Activated T-helper 1 cell treated with anti-CD3 and anti-CD28 coated beads, Interleukin-12 subunit alpha, Interleukin-12 subunit beta, Interleukin-2, Interleukin-4 antibody, amounts not matched to agents 30 ng/mL and 10 ng/mL and 1 ng/mL, durations not matched to agents 14 hours and 24 hours and 36 hours (primary cell): ENCODE measurements at regions of chr17 and their contacts with region 1.

Region 1: GRCh38 chr17:66397486-66397885 is 95.1 kb downstream of the PRKCA start:
- DNase-seq: no peak
- H3K4me3 Mint-ChIP-seq: no peak overlapping the region
- H3K27ac Mint-ChIP-seq: peak overlapping the region; percentile 69
- H3K4me1 Mint-ChIP-seq: peaks cover 80% of the 10 kb centered on the region
- H3K27me3 Mint-ChIP-seq: no peaks in the 10 kb centered on the region

Region 2: GRCh38 chr17:66364990-66365490 is 32.4 kb before region 1 on chr17:
- intact Hi-C with region 1: loop called (anchors 1 kb)
- DNase-seq: no peak
- H3K4me3 Mint-ChIP-seq: peak overlapping the region; percentile 53
- H3K27ac Mint-ChIP-seq: peak overlapping the region; percentile 91
- H3K4me1 Mint-ChIP-seq: peaks cover 83% of the 10 kb centered on the region
- H3K27me3 Mint-ChIP-seq: no peaks in the 10 kb centered on the region

Region 3: DNA sequence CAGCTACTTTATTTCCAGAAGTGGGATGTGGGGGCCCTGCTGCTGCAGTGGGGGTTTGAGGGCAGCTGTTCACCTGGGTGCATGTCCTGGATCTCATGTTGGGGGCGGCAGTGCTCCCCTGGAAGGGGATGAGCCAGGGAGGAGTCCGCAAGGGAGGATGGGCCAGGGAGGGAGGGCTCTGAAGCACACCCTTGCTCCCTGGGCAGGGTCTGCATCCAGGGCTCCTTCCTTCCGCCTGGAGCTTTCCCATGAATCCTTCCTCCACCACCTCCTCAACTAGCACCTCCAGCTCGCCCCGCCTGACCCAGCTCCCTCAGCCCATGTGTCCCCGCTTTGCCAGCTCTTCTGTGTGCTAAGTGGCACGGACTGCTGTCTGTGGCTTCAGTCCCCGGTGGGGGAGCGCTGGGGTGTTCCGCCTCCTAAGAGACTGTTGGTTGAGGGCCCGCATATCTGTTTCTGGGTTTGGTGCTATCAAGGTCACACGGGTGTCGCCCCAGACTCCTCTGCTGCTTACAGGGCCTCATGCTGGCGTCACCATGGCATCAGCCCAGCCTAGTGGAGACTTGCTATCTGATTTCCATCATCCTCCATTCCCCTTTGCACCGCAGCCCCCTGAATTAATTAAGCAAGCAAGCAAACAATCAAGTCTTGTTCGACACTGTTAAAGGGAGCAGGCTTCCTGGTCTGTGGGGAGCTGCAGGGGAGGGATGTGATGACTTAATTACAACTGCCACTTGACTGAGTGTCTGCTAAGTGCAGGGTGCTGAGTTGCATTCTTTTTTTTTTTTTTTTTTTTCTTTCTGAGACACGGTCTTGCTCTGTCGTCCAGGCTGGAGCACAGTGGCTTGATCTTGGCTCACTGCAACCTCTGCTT is 23.3 kb before region 1 on chr17:
- intact Hi-C with region 1: loop called (anchors 1 kb)
- DNase-seq: no peak
- H3K4me3 Mint-ChIP-seq: peak overlapping the region; percentile 30
- H3K27ac Mint-ChIP-seq: peak overlapping the region; percentile 61
- H3K4me1 Mint-ChIP-seq: peaks cover 64% of the 10 kb centered on the region
- H3K27me3 Mint-ChIP-seq: no peaks in the 10 kb centered on the region

Region 4: GRCh38 chr17:66379996-66380395 is 17.5 kb before region 1 on chr17:
- intact Hi-C with region 1: loop called (anchors 2 kb)
- DNase-seq: no peak
- H3K4me3 Mint-ChIP-seq: no peak overlapping the region
- H3K27ac Mint-ChIP-seq: no peak overlapping the region
- H3K4me1 Mint-ChIP-seq: peaks cover 48% of the 10 kb centered on the region
- H3K27me3 Mint-ChIP-seq: no peaks in the 10 kb centered on the region

Region 5: GRCh38 chr17:66420961-66421371 is 23.5 kb after region 1 on chr17:
- intact Hi-C with region 1: loop called (anchors 1 kb)
- DNase-seq: no peak
- H3K4me3 Mint-ChIP-seq: no peak overlapping the region
- H3K27ac Mint-ChIP-seq: peak overlapping the region; percentile 62
- H3K4me1 Mint-ChIP-seq: peaks cover 62% of the 10 kb centered on the region
- H3K27me3 Mint-ChIP-seq: no peaks in the 10 kb centered on the region

Region 6: GRCh38 chr17:66441101-66441661 is 43.7 kb after region 1 on chr17:
- intact Hi-C with region 1: no loop called
- DNase-seq: no peak
- H3K4me3 Mint-ChIP-seq: no peak overlapping the region
- H3K27ac Mint-ChIP-seq: peak overlapping the region; percentile 13
- H3K4me1 Mint-ChIP-seq: peaks cover 36% of the 10 kb centered on the region
- H3K27me3 Mint-ChIP-seq: no peaks in the 10 kb centered on the region

Region 7: GRCh38 chr17:66507103-66507853 is 109.8 kb after region 1 on chr17:
- intact Hi-C with region 1: no loop called
- DNase-seq: no peak
- H3K4me3 Mint-ChIP-seq: peak overlapping the region; percentile 62
- H3K27ac Mint-ChIP-seq: peak overlapping the region; percentile 97
- H3K4me1 Mint-ChIP-seq: peaks cover 68% of the 10 kb centered on the region
- H3K27me3 Mint-ChIP-seq: no peaks in the 10 kb centered on the region